CD4-positive, alpha-beta T cell (primary cell): ENCODE measurements at regions of chr20 and their contacts with region 1.

Region 1: GRCh38 chr20:22691369-22692118 is 107.2 kb upstream of the FOXA2 start:
- DNase-seq: peak; percentile 3 to 66 (median 11)
- ATAC-seq: peak; percentile 37
- H3K4me3 ChIP-seq: no peak overlapping the region
- H3K4me3 Mint-ChIP-seq: no peak overlapping the region
- H3K27ac ChIP-seq: no peak overlapping the region
- H3K27ac Mint-ChIP-seq: no peak overlapping the region
- H3K4me1 ChIP-seq: peaks cover 5% of the 10 kb centered on the region
- H3K4me1 Mint-ChIP-seq: no peaks in the 10 kb centered on the region
- H3K27me3 ChIP-seq: peaks cover 0 to 4% of the 10 kb centered on the region in 2 experiments
- H3K27me3 Mint-ChIP-seq: no peaks in the 10 kb centered on the region
- CTCF ChIP-seq: peak; percentile 59

Region 2: DNA sequence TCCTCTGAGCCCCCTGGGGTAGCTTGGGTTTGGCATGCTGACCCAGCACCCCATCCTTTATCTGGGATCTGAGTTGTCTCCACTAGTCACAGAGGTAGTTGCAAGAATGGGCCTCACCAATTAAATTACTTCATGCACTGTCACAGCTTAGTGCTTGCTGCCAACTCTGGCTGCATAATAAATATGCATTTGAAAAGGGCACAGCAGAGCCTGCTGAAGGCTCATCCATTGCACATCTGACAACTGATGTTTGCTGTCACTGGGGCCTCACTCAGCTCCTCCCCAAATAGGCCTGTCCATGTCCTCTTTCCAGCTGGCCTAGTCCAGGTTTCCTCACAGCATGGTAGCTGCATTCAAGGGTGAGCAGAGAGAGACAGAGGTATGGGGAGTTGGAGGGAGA is 645.8 kb after region 1 on chr20:
- CTCF ChIA-PET with region 1: no interaction called
- POLR2A ChIA-PET with region 1: no interaction called
- intact Hi-C with region 1: loop called in 1 of 2 experiments (anchors 5 kb)
- DNase-seq: no peak
- ATAC-seq: no peak
- H3K4me3 ChIP-seq: no peak overlapping the region
- H3K4me3 Mint-ChIP-seq: no peak overlapping the region
- H3K27ac ChIP-seq: no peak overlapping the region
- H3K27ac Mint-ChIP-seq: no peak overlapping the region
- H3K4me1 ChIP-seq: peaks cover 3% of the 10 kb centered on the region
- H3K4me1 Mint-ChIP-seq: no peaks in the 10 kb centered on the region
- H3K27me3 ChIP-seq: no peaks in the 10 kb centered on the region
- H3K27me3 Mint-ChIP-seq: no peaks in the 10 kb centered on the region
- CTCF ChIP-seq: no peak

Region 3: DNA sequence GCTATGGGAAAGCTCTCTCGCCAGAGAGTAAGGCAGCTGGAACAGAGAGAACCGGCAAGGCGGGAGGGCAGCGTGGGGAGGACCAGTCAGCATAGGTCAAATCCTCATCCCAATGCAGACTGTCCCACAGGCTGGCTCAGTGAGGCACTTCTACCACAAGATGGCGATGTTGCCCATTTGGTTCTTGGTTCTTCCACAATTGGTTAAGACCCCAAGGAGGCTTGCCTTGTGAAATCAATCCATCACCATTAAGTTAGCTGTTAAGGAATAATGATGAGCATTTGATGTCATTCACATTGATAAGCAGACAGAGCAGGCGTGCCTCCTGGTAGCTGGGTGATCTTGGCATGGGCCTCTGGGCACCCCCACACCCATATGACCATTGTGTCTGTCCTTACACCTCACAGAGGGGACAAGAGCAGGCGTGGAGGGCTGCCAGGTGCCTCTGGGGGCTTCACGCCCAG is 750.3 kb after region 1 on chr20:
- CTCF ChIA-PET with region 1: no interaction called
- POLR2A ChIA-PET with region 1: no interaction called
- intact Hi-C with region 1: loop called in 1 of 2 experiments (anchors 10 kb)
- DNase-seq: peak; percentile 17 to 74 (median 40)
- ATAC-seq: peak; percentile 51
- H3K4me3 ChIP-seq: no peak overlapping the region
- H3K4me3 Mint-ChIP-seq: no peak overlapping the region
- H3K27ac ChIP-seq: no peak overlapping the region
- H3K27ac Mint-ChIP-seq: no peak overlapping the region
- H3K4me1 ChIP-seq: no peaks in the 10 kb centered on the region
- H3K4me1 Mint-ChIP-seq: no peaks in the 10 kb centered on the region
- H3K27me3 ChIP-seq: no peaks in the 10 kb centered on the region
- H3K27me3 Mint-ChIP-seq: no peaks in the 10 kb centered on the region
- CTCF ChIP-seq: peak; percentile 78